Activated CD4-positive, alpha-beta memory T cell treated with anti-CD3 and anti-CD28 coated beads for 36 hours (primary cell): ENCODE measurements at regions of chr16 and their contacts with region 1.

Region 1: GRCh38 chr16:19898924-19899604 is 14.4 kb upstream of the GPRC5B start:
- DNase-seq: peak; percentile 48
- H3K4me3 Mint-ChIP-seq: no peak overlapping the region
- H3K27ac Mint-ChIP-seq: no peak overlapping the region
- H3K4me1 Mint-ChIP-seq: peaks cover 2% of the 10 kb centered on the region
- H3K27me3 Mint-ChIP-seq: peaks cover 7% of the 10 kb centered on the region

Region 2: DNA sequence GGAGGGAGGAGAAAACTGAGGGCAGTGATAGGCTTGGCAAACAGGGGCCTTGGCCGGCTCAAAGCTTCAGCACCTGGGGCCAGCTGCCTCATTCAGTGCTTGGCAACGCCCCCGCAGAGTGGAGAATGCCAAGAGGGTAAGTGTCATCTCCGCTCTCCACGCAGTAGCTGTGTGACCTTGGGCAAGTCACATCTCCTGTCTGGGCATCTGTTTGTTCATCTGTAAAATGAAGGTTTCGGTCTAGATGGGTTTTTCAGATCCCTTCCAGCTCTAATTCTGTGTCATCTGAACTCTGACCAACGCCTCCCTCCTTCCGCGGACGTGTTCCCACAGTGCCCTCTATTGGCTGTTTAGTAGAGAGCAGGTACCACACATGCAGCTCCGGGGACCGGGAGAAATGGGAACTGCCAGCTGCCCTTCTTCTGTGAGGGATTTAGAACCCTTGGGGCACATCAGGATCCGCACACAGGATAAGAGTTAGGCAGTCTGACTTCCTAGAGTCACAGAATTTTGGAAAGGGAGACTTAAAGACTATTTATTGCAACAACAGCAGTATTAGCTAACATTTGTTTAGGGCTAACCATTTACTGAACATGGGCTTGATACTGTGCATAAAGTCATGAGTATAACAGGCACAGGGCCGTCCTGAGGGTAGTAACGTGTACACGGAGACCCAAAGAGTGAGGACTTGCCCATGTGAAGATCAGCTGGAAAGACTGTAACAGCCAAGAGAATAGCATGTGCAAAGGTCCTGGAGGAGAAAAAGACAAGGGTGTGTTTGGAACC is 401.4 kb after region 1 on chr16:
- CTCF ChIA-PET with region 1: interaction called, 14 read pairs
- POLR2A ChIA-PET with region 1: no interaction called
- intact Hi-C with region 1: no loop called
- DNase-seq: peak; percentile 52
- H3K4me3 Mint-ChIP-seq: no peak overlapping the region
- H3K27ac Mint-ChIP-seq: no peak overlapping the region
- H3K4me1 Mint-ChIP-seq: no peaks in the 10 kb centered on the region
- H3K27me3 Mint-ChIP-seq: peaks cover 4% of the 10 kb centered on the region